Activated naive CD4-positive, alpha-beta T cell treated with anti-CD3 and anti-CD28 coated beads for 36 hours (primary cell): ENCODE measurements at regions of chr20 and their contacts with region 1.

Region 1: GRCh38 chr20:26208296-26209091 is 511.8 kb upstream of the ZNF337 start:
- DNase-seq: peak; percentile 61
- H3K4me3 Mint-ChIP-seq: peak overlapping the region; percentile 36
- H3K27ac Mint-ChIP-seq: no peak overlapping the region
- H3K4me1 Mint-ChIP-seq: peaks cover 19% of the 10 kb centered on the region
- H3K27me3 Mint-ChIP-seq: peaks cover 4% of the 10 kb centered on the region

Region 2: DNA sequence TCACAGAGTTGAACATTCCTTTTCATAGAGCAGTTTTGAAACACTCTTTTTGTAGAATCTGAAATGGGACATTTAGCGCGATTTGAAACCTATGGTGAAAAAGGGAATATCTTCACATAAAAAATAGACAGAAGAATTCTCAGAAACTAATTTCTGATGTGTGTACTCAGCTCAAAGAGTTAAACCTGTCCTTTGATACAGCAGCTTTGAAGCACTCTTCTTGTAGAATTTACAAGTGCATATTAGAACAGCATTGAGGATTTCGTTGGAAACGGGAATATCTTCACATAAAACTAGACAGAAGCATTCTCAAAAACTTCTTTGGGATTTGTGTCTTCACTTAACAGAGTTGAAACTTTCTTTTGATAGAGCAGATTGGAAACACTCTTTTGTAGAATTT is 138.9 kb after region 1 on chr20:
- CTCF ChIA-PET with region 1: no interaction called
- intact Hi-C with region 1: loop called (anchors 5 kb)
- DNase-seq: no peak
- H3K4me3 Mint-ChIP-seq: no peak overlapping the region
- H3K27ac Mint-ChIP-seq: no peak overlapping the region
- H3K4me1 Mint-ChIP-seq: peaks cover 79% of the 10 kb centered on the region
- H3K27me3 Mint-ChIP-seq: peaks cover 1% of the 10 kb centered on the region